A673 (cell line): ENCODE measurements at regions of chr9 and their contacts with region 1.

Region 1: GRCh38 chr9:38478211-38478610 is 54.0 kb upstream of the IGFBPL1 start:
- DNase-seq: no peak
- H3K4me3 ChIP-seq: no peak overlapping the region
- H3K27ac ChIP-seq: no peak overlapping the region
- H3K4me1 ChIP-seq: no peaks in the 10 kb centered on the region
- H3K27me3 ChIP-seq: no peaks in the 10 kb centered on the region
- CTCF ChIP-seq: no peak

Region 2: DNA sequence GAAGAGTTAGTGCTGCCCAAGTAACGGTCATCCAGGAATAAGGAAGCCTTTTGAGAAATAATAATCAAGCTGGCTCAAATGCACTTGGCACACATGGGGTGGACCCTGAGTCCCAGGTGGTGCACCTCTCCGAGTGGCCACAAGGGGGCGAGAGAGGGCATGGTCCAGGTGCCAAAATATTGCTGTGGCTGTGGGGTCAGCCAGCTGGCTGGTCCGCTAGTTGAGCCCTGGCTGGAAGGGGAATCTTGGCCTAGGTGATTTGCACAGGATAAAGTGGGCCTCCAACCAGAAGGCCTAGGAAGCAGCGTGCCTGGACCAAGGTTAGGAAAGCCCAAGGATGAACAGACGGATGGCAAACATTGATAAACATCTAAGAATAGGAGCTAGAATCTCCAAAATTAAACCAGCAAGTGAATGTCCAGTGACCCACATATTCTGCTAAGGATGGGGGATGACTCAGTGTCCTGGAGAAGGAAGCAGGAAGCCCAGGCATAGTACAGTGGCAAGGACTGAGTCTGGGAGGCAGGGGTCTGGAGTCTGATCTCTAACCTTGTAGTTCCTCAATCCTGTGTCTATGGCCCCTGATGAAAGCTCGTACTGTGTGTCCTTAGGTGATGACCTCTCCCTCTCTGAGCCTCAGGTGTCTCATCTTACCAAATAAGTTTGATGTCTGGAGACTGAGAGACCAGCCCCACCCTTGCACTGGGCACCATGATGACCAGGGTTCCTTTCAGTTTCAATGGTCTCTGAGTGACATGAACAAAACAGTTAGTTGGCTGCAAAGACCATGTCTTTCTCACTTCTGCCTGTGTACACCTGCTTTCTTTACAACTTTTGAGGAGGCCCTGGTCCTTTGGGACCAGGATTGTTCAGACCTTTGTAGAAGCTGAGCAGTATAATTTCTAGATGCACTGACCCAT is 389.9 kb before region 1 on chr9:
- CTCF ChIA-PET with region 1: no interaction called
- POLR2A ChIA-PET with region 1: no interaction called
- intact Hi-C with region 1: no loop called
- DNase-seq: peak; percentile 50
- H3K4me3 ChIP-seq: no peak overlapping the region
- H3K27ac ChIP-seq: no peak overlapping the region
- H3K4me1 ChIP-seq: no peaks in the 10 kb centered on the region
- H3K27me3 ChIP-seq: no peaks in the 10 kb centered on the region
- CTCF ChIP-seq: peak; percentile 99

Region 3: GRCh38 chr9:38453835-38454234 is 24.4 kb before region 1 on chr9:
- CTCF ChIA-PET with region 1: interaction called, 10 read pairs
- POLR2A ChIA-PET with region 1: no interaction called
- intact Hi-C with region 1: no loop called
- DNase-seq: no peak
- H3K4me3 ChIP-seq: no peak overlapping the region
- H3K27ac ChIP-seq: no peak overlapping the region
- H3K4me1 ChIP-seq: no peaks in the 10 kb centered on the region
- H3K27me3 ChIP-seq: peaks cover 56% of the 10 kb centered on the region
- CTCF ChIP-seq: no peak